Calu3 (cell line): ENCODE measurements at regions of chr1 and their contacts with region 1.

Region 1: DNA sequence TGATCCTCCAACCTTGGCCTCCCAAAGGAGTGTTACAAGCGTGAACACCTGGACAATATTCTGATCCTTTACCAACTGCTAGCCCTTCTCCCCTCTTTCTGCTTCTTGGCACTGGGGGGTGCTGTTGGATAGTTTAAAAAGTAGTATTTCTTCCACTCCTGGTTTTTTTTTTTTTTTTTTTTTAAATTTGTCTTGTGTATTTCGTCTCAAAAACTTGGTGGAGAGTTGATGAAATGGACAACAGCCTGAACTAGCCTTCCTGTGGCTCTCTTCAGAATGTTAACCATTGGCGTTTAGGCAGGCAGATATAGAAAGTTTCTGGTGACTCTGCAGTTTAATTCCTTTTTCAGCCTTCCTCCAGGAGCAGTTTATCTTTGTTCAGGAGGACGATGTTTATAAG is 69.7 kb upstream of the USP24 start:
- DNase-seq: peak; percentile 55
- H3K4me3 Mint-ChIP-seq: no peak overlapping the region
- H3K27ac Mint-ChIP-seq: no peak overlapping the region
- H3K4me1 Mint-ChIP-seq: peaks cover 13% of the 10 kb centered on the region
- H3K27me3 Mint-ChIP-seq: no peaks in the 10 kb centered on the region
- CTCF ChIP-seq: peak; percentile 70

Region 2: DNA sequence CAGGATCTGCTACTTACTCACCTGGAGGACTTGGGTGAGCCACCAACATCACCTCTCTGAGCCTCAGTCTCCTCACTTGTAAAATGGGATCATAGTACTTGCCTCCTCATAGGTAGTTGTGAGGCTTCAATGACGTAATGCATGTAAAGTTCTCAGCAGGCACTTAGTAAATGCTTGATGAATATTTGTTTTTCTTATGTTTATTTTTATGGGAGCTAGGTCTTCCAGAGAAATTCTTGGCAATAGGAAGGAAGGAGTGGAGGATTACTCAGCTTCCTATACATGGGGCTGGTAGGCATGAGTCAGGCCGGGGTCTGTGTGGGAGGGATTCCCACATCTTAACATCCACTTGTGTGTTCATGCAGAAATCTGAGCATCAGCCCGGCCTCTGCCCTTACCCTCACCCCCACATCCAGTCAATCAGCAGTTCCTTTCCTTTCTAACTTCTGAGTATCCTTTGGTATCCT is 25.7 kb after region 1 on chr1:
- CTCF ChIA-PET with region 1: no interaction called
- intact Hi-C with region 1: no loop called
- DNase-seq: no peak
- H3K4me3 Mint-ChIP-seq: no peak overlapping the region
- H3K27ac Mint-ChIP-seq: no peak overlapping the region
- H3K4me1 Mint-ChIP-seq: no peaks in the 10 kb centered on the region
- H3K27me3 Mint-ChIP-seq: peaks cover 32% of the 10 kb centered on the region
- CTCF ChIP-seq: no peak

Region 3: GRCh38 chr1:55816456-55817426 is 531.9 kb after region 1 on chr1:
- CTCF ChIA-PET with region 1: no interaction called
- intact Hi-C with region 1: no loop called
- DNase-seq: no peak
- H3K4me3 Mint-ChIP-seq: no peak overlapping the region
- H3K27ac Mint-ChIP-seq: no peak overlapping the region
- H3K4me1 Mint-ChIP-seq: no peaks in the 10 kb centered on the region
- H3K27me3 Mint-ChIP-seq: no peaks in the 10 kb centered on the region
- CTCF ChIP-seq: no peak

Region 4: DNA sequence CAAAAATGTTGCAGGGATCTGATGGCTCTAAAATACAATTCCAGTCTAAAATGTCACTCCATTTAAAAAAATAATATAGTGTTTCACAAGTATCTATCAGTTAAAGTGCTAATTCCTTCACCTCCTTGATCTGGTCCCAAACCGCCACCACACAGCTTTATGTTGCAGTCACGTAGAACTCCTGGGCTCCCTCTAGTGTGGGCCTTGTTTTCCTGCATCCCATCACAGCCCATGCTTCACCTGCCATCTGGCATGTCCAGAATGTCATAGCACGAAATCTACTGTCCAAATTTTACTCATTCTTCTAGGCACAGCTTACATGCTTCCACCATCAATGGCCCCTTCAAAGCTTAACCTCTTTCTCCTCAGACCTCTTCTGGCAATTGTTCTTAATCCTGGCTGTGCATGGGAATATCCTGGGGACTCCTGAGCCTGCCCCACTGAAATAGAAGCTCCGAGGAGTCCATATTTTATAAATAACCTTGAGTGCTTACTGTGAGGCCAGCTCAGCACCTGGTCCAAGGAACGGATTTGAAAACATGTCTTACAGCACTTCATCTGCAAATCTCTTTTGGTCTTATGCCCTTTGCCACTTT is 1518.8 kb after region 1 on chr1:
- CTCF ChIA-PET with region 1: no interaction called
- intact Hi-C with region 1: loop called (anchors 5 kb)
- DNase-seq: peak; percentile 74
- H3K4me3 Mint-ChIP-seq: no peak overlapping the region
- H3K27ac Mint-ChIP-seq: no peak overlapping the region
- H3K4me1 Mint-ChIP-seq: no peaks in the 10 kb centered on the region
- H3K27me3 Mint-ChIP-seq: peaks cover under 1% of the 10 kb centered on the region
- CTCF ChIP-seq: peak; percentile 62